Endothelial cell of umbilical vein (primary cell): ENCODE measurements at regions of chr3 and their contacts with region 1.

Region 1: DNA sequence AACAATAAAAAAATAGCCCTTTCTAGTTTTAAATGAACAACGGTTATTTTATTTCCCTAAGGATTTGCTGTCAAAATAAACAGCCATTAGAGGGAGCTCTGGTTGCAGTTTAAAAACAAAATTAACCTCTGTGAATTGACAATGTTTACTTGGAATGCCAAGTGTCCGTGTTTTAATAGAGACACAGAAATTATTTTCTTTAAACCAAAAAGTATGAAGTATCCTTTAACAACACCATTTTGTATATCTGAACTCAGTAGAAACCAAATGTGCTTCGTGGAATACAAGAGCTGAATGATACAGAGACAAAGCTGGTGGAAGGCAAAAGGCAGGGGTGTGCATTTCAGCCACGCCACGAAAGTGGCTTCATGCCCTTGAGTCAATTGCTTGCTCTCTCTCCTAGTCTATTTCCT is 74.4 kb downstream of the MOBP start:
- DNase-seq: peak; percentile 79
- H3K4me3 ChIP-seq: peak overlapping the region in 1 of 3 experiments; percentile 40
- H3K27ac ChIP-seq: peak overlapping the region; percentile 10
- H3K4me1 ChIP-seq: peaks cover 9% of the 10 kb centered on the region
- H3K27me3 ChIP-seq: no peaks in the 10 kb centered on the region
- CTCF ChIP-seq: peak; percentile 40 to 49
- POLR2A ChIP-seq: no peak

Region 2: DNA sequence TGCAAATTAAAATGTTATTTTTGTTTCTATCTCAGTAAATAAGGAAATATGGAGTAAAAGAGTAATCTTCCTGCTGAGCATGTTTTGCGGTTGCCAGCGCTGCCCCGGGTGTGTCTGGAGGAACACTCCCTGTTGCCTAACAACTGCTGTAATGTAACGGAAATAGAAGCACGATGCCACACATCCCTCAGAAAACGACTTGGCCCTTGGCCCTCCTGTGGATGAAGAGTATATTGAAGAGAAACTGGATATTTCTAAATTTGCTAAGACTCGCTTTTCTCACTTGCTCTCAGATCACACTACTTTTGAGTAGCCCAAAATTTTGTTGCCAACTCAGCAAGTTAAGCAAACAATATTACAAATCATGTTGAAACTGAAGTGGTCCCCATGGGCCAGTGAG is 281.0 kb before region 1 on chr3:
- CTCF ChIA-PET with region 1: no interaction called
- POLR2A ChIA-PET with region 1: no interaction called
- dilution Hi-C with region 1: no loop called
- intact Hi-C with region 1: no loop called
- DNase-seq: peak; percentile 66
- H3K4me3 ChIP-seq: no peak overlapping the region
- H3K27ac ChIP-seq: no peak overlapping the region
- H3K4me1 ChIP-seq: no peaks in the 10 kb centered on the region
- H3K27me3 ChIP-seq: peaks cover 8 to 12% of the 10 kb centered on the region in 2 experiments
- CTCF ChIP-seq: peak; percentile 11 to 23
- POLR2A ChIP-seq: no peak

Region 3: GRCh38 chr3:39460677-39461076 is 81.2 kb before region 1 on chr3:
- CTCF ChIA-PET with region 1: no interaction called
- POLR2A ChIA-PET with region 1: no interaction called
- dilution Hi-C with region 1: no loop called
- intact Hi-C with region 1: no loop called
- DNase-seq: no peak
- H3K4me3 ChIP-seq: no peak overlapping the region
- H3K27ac ChIP-seq: no peak overlapping the region
- H3K4me1 ChIP-seq: no peaks in the 10 kb centered on the region
- H3K27me3 ChIP-seq: peaks cover 3 to 5% of the 10 kb centered on the region in 2 experiments
- CTCF ChIP-seq: no peak
- POLR2A ChIP-seq: no peak

Region 4: GRCh38 chr3:39531650-39532049 is 10.3 kb before region 1 on chr3:
- CTCF ChIA-PET with region 1: interaction called, 16 read pairs
- POLR2A ChIA-PET with region 1: no interaction called
- dilution Hi-C with region 1: no loop called
- intact Hi-C with region 1: no loop called
- DNase-seq: peak; percentile 98
- H3K4me3 ChIP-seq: no peak overlapping the region
- H3K27ac ChIP-seq: peak overlapping the region; percentile 84
- H3K4me1 ChIP-seq: peaks cover 27% of the 10 kb centered on the region
- H3K27me3 ChIP-seq: no peaks in the 10 kb centered on the region
- CTCF ChIP-seq: no peak
- POLR2A ChIP-seq: peak; percentile 43

Region 5: DNA sequence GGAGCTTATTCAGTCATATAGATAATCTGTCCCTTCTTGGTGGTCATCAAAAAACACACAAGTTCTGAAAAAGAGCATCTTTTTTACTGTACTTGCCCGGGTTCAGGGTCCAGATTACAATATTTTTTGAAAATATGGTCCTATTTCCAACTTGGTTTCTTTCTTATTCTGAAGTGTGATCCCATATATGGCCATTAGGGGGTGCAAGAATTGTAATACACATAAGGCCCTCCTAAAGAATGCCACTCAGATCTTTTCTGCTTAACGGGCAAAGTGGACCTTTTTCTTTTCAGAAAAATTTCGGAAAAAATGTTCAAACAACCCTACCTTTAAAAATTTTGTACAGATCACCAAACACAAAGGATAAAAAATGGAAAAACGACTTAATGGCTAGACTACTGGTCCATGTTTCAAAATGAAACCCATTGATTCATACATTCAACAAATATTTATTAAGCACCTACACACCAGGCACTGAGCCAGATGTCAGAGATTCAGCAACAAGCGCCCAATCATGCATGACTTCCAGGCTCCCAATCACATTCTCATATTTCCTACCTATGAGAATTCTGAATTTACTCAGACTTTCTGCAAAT is 165.5 kb after region 1 on chr3:
- CTCF ChIA-PET with region 1: interaction called, 12 read pairs
- POLR2A ChIA-PET with region 1: no interaction called
- dilution Hi-C with region 1: no loop called
- intact Hi-C with region 1: loop called (anchors 5 kb)
- DNase-seq: peak; percentile 65
- H3K4me3 ChIP-seq: no peak overlapping the region
- H3K27ac ChIP-seq: no peak overlapping the region
- H3K4me1 ChIP-seq: peaks cover 7% of the 10 kb centered on the region
- H3K27me3 ChIP-seq: no peaks in the 10 kb centered on the region
- CTCF ChIP-seq: peak; percentile 39 to 61
- POLR2A ChIP-seq: no peak

Region 6: GRCh38 chr3:39937874-39938273 is 396.0 kb after region 1 on chr3:
- CTCF ChIA-PET with region 1: no interaction called
- POLR2A ChIA-PET with region 1: no interaction called
- dilution Hi-C with region 1: no loop called
- intact Hi-C with region 1: no loop called
- DNase-seq: peak; percentile 20
- H3K4me3 ChIP-seq: no peak overlapping the region
- H3K27ac ChIP-seq: no peak overlapping the region
- H3K4me1 ChIP-seq: peaks cover 25% of the 10 kb centered on the region
- H3K27me3 ChIP-seq: no peaks in the 10 kb centered on the region
- CTCF ChIP-seq: no peak
- POLR2A ChIP-seq: no peak

Region 7: DNA sequence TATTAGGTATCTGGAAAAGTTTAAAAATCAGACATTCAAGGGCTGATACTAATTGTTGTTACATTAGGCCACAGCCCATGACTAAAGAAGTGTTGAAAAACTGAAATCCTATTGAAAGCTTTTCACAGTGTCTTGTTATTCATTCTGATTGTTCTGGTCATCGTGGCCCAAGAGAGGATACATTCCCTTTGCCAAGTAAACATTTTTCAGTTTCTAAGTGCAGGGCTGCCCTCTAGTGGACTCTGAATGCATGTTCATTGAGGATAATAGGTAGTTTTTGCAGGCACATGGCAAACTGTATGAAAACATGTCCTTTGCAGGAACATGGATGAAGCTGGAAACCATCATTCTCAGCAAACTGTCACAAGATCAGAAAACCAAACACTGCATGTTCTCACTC is 448.6 kb after region 1 on chr3:
- CTCF ChIA-PET with region 1: interaction called, 20 read pairs
- POLR2A ChIA-PET with region 1: no interaction called
- dilution Hi-C with region 1: no loop called
- intact Hi-C with region 1: loop called (anchors 1 kb)
- DNase-seq: peak; percentile 70
- H3K4me3 ChIP-seq: no peak overlapping the region
- H3K27ac ChIP-seq: no peak overlapping the region
- H3K4me1 ChIP-seq: no peaks in the 10 kb centered on the region
- H3K27me3 ChIP-seq: no peaks in the 10 kb centered on the region
- CTCF ChIP-seq: peak; percentile 34 to 36
- POLR2A ChIP-seq: no peak

Region 8: GRCh38 chr3:40179016-40179415 is 637.1 kb after region 1 on chr3:
- CTCF ChIA-PET with region 1: interaction called, 55 read pairs
- POLR2A ChIA-PET with region 1: no interaction called
- dilution Hi-C with region 1: no loop called
- intact Hi-C with region 1: loop called (anchors 1 kb)
- DNase-seq: peak; percentile 80
- H3K4me3 ChIP-seq: no peak overlapping the region
- H3K27ac ChIP-seq: no peak overlapping the region
- H3K4me1 ChIP-seq: no peaks in the 10 kb centered on the region
- H3K27me3 ChIP-seq: no peaks in the 10 kb centered on the region
- CTCF ChIP-seq: peak; percentile 68 to 69
- POLR2A ChIP-seq: no peak

Region 9: DNA sequence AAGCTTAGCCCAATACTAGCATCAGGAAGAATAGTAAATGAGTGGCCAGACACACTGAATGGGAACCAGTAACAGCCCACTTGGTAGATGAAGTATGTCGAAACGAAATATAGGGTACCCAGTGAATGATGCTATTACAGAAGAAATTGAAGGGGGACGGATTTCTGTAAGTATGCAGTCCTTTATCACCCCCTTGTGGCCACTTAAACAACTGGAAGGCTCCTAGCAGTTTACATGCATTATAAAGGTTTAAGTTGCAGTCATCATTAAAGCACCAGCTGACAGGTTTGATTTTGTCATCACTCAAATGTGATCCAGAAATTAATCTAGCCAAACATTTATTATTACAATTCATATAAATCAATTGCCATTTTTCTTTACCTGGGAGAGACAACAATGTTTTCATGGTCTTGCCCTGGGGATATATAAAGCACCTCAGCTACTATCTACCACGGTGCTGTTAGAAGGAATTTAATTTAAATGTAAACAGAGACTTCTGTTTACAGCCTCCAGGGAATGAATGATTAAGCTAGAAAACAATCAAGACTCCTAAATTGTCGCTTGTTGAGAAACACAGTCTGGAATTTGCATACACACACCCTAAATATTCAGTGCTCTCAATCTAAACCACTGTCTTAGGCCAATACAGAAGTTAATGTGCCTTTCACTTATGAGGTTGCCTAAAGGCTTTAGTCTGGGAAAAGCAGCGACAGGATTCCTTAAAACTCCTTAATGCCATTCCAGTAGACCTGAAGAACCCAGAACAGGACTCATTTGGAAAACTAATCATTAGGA is 775.3 kb after region 1 on chr3:
- CTCF ChIA-PET with region 1: interaction called, 5 read pairs
- POLR2A ChIA-PET with region 1: no interaction called
- dilution Hi-C with region 1: no loop called
- intact Hi-C with region 1: loop called (anchors 1 kb)
- DNase-seq: peak; percentile 64
- H3K4me3 ChIP-seq: no peak overlapping the region
- H3K27ac ChIP-seq: no peak overlapping the region
- H3K4me1 ChIP-seq: no peaks in the 10 kb centered on the region
- H3K27me3 ChIP-seq: no peaks in the 10 kb centered on the region
- CTCF ChIP-seq: peak; percentile 61 to 75
- POLR2A ChIP-seq: no peak